ENCODE measurements at regions of chr3 and their contacts with region 1.

Region 1: DNA sequence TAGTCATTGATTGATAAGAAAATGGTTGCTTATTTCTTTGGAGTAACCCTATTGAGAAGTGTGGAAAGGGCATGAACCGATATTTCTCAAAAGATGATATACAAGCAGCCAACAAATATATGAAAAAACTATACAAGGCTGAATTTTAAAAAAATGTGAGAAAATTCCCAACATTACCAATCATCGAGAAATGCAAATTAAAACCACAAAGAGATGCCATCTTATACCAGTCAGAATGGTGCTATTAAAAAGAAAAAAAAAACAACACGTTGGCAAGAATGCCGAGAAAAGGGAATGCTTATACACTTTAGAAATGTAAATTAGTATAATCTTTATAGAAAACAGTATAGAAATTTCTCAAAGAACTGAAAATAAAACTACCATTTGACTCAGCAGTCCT is 77.7 kb upstream of the ROBO1 start:
- DNase-seq: no peak
- ATAC-seq: no peak
- H3K4me3 ChIP-seq: no peak overlapping the region
- H3K27ac ChIP-seq: no peak overlapping the region
- H3K4me1 ChIP-seq: no peaks in the 10 kb centered on the region
- H3K27me3 ChIP-seq: no peaks in the 10 kb centered on the region
- CTCF ChIP-seq: no peak
- POLR2A ChIP-seq: no peak
- RAD21 ChIP-seq: no peak

Region 2: GRCh38 chr3:79869461-79870312 is 24.1 kb after region 1 on chr3:
- CTCF ChIA-PET with region 1: no interaction called
- POLR2A ChIA-PET with region 1: interaction called, 10 read pairs
- dilution Hi-C with region 1: no loop called
- in situ Hi-C with region 1: no loop called
- intact Hi-C with region 1: no loop called
- DNase-seq: no peak
- ATAC-seq: no peak
- H3K4me3 ChIP-seq: no peak overlapping the region
- H3K27ac ChIP-seq: no peak overlapping the region
- H3K4me1 ChIP-seq: no peaks in the 10 kb centered on the region
- H3K27me3 ChIP-seq: no peaks in the 10 kb centered on the region
- CTCF ChIP-seq: no peak
- POLR2A ChIP-seq: no peak
- RAD21 ChIP-seq: no peak